ENCODE measurements at regions of chr17 and their contacts with region 1.

Region 1: DNA sequence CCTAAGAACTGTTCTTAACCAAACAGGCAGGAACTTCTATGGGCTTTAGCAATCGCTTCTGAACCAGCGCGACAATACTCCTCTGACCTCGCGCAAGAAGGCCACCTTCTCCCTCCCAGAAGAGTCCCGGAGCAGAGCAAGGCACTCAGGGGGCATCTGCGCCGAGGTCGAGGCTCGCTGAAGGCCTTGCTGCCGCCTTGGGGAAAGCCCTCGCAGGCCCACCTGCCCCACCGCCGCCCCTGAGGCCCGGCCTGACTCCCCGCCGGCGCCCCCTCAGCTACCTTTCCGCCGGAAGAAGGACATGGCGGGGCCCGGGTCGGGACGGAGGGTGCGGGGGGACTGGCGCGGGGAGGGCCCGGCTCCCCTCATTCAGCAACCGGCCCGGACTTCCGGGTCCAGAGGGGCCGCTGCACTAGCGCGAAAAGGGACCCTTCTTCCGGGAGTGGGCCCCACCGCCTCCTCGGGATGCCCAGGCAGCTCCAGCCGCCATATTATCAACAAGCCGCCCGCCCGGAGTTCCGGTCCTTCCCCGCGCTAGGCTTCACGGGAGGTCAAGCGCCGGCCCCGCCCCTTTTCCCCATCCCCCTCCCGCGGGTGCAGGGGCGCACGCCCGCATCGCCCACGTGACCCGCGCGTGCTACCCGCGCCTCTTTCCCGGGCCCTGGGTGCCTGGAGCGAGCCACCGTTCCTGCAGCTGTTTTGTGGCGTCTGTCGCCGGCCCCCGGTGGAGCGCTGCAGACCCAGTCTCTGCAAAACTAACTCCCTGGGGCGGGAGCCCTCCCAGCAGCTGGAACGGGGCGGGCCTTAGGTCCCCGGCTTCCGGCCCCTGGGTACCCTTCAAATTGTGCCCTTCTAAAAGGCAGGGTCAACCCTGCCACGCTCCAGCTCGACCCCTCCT is at the start of gene AKAP10:
- DNase-seq: peak; percentile 94
- ATAC-seq: peak; percentile 87
- H3K4me3 ChIP-seq: peak within 1 kb of the TSS; percentile 83 to 93 (median 90)
- H3K4me3 Mint-ChIP-seq: peak within 1 kb of the TSS; percentile 99
- H3K27ac ChIP-seq: peak within 1 kb of the TSS; percentile 85 to 96
- H3K27ac Mint-ChIP-seq: peak within 1 kb of the TSS; percentile 98
- H3K4me1 ChIP-seq: peaks cover 23 to 40% of the 10 kb centered on the region in 2 donors
- H3K4me1 Mint-ChIP-seq: peaks cover 47% of the 10 kb centered on the region
- H3K27me3 ChIP-seq: no peaks in the 10 kb centered on the region
- H3K27me3 Mint-ChIP-seq: no peaks in the 10 kb centered on the region
- CTCF ChIP-seq: no peak
- total RNA-seq, gene AKAP10: 68.2 and 71.2 TPM in 2 replicates

Region 2: DNA sequence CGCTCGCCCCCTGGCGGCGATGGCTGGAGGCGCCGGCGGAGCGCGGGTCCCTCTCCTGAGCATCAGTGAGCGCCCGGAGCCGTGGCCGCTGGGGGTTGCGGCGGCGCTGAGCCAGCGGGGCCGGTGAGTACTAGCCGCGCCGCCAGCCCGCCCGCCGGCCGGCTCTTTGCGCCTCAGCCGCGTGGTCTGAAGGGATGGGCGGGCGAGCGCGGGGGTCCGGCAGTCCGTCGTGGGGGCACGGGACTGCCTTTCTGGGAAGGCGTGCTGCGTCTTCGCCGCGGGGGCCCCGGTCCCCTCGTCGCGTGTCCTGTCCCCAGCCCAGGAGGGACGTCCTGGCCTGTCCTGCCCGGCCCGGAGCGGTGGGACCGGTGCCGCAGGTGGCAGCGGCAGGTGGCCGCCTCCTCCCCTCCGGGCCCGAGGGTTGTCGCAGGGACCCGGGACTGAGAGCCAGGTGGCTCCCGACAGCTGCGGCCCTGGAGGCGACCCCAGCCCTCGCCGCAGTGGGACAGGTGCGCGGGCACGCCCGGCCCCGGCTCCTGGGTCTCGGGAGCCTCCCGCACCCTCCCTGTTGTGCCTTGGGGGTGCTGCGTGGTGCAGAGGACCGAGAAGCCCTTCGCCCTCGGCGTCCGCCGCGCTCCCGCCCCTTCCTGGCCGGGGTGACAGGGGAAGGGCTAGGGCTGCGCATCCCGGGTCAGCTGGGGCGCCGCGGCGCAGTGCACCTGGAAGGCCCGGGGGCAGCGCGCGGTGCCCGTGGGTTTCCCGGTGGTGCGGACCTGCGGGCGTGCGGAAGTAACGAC is 31.9 kb after region 1 on chr17 and contains the start of gene SPECC1:
- CTCF ChIA-PET with region 1: interaction called, 5 read pairs
- POLR2A ChIA-PET with region 1: interaction called, 8 read pairs
- intact Hi-C with region 1: loop called (anchors 1 kb)
- DNase-seq: peak; percentile 90
- ATAC-seq: peak; percentile 98
- H3K4me3 ChIP-seq: peak within 1 kb of the TSS; percentile 64 to 74 (median 68)
- H3K4me3 Mint-ChIP-seq: peak within 1 kb of the TSS; percentile 94
- H3K27ac ChIP-seq: no peak within 1 kb of the TSS
- H3K27ac Mint-ChIP-seq: peak within 1 kb of the TSS; percentile 63
- H3K4me1 ChIP-seq: peaks cover 10 to 13% of the 10 kb centered on the region in 2 donors
- H3K4me1 Mint-ChIP-seq: peaks cover 11% of the 10 kb centered on the region
- H3K27me3 ChIP-seq: peaks cover 0 to 23% (median 16%) of the 10 kb centered on the region in 4 experiments
- H3K27me3 Mint-ChIP-seq: peaks cover 53% of the 10 kb centered on the region
- CTCF ChIP-seq: peak; percentile 99
- total RNA-seq, gene SPECC1: 6.1 and 7.4 TPM in 2 replicates

Region 3: DNA sequence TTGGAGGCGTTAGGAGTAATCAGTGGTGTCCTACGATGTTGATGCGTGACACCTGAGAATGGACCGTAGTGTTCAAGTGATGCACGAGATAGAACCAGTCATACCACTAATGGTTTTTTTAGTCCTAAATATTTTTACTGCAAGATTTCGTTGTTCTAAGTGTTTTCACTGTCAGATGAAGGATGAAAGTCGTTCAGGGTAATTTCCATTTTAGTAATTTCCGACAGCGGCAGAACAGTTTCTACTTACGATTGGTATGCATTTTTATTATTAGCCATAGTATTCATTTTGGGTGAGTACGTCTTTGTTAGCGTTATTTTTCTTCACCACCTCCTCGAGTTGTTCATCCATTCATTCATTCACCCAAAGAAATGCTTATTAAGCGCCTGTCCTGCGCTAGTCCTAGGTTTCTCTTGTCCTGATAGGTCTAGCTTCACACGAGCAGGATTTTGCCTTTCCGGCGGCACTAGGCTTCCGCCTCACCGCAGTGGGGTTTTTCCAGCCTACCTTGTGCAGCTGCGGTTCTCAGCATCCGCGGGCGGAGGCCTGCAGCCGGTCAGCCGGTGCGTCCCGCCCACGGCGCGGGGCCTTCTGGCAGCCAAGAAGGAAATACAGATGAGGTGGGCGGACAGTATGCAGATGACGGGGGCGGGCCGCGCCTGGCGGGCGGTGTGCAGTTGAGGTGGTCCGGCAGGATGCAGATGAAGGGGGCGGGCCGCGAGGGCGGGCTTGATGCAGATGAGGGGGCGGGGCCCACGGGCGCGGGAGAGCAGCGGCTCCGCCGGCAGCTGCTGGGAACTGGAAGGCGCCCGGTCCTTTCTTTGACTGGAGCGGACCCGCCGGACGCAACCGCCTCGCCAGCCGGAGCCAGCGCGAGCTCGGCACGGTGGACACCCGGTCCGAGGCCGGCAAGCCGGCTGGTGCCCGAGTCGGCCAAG is 178.0 kb after region 1 on chr17:
- CTCF ChIA-PET with region 1: no interaction called
- POLR2A ChIA-PET with region 1: no interaction called
- intact Hi-C with region 1: loop called (anchors 1 kb)
- DNase-seq: peak; percentile 99
- ATAC-seq: peak; percentile 96
- H3K4me3 ChIP-seq: peak overlapping the region; percentile 8 to 77 (median 72)
- H3K4me3 Mint-ChIP-seq: no peak overlapping the region
- H3K27ac ChIP-seq: peak overlapping the region; percentile 56 to 85
- H3K27ac Mint-ChIP-seq: no peak overlapping the region
- H3K4me1 ChIP-seq: peaks cover 27 to 35% of the 10 kb centered on the region in 2 donors
- H3K4me1 Mint-ChIP-seq: peaks cover 4% of the 10 kb centered on the region
- H3K27me3 ChIP-seq: no peaks in the 10 kb centered on the region
- H3K27me3 Mint-ChIP-seq: no peaks in the 10 kb centered on the region
- CTCF ChIP-seq: no peak